CD4-positive, alpha-beta T cell (primary cell): ENCODE measurements at regions of chr4 and their contacts with region 1.

Region 1: DNA sequence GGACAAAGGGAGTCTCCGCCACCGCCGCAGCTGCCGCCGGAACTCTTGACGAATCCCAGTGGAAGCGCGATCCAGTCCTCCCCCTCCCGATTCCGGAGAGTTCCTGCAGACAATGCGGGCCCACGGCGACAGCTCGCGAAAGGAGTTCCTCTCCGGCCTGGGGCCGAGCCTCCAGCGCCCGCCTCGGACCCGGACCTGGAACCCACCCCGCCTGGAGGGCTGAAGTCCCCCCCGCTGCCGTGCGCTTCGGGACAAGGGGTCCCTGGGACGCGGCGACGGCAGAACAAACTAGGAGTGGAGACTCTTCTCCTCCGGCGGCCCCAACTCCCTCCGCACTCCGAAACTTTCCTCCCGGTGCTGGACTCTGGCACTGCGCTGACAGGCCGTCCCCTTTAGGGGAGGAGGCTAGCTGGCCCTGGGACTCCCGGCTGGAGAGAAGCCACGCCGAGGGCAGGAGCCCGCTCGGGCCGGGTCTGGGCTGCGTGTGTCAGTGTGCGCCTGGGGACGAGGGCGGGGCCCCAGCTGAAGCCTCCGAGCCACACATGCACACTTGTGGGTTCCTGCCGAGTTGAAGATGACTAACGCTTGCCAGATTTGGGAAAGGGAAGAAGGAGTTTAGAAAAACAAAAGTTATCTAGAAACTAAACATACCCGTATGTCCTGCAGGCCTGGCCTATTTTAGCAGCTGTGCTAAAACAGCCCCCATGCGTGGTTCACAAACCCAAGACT is at the start of gene ANTXR2:
- DNase-seq: peak; percentile 37 to 88 (median 67)
- ATAC-seq: peak; percentile 80
- H3K4me3 ChIP-seq: peak within 1 kb of the TSS; percentile 90
- H3K4me3 Mint-ChIP-seq: peak within 1 kb of the TSS; percentile 99
- H3K27ac ChIP-seq: peak within 1 kb of the TSS; percentile 78 to 82
- H3K27ac Mint-ChIP-seq: peak within 1 kb of the TSS; percentile 95
- H3K4me1 ChIP-seq: peaks cover 22% of the 10 kb centered on the region
- H3K4me1 Mint-ChIP-seq: peaks cover 79% of the 10 kb centered on the region
- H3K27me3 ChIP-seq: no peaks in the 10 kb centered on the region
- H3K27me3 Mint-ChIP-seq: no peaks in the 10 kb centered on the region
- CTCF ChIP-seq: no peak
- total RNA-seq, gene ANTXR2: 15.3 to 16.7 TPM

Region 2: DNA sequence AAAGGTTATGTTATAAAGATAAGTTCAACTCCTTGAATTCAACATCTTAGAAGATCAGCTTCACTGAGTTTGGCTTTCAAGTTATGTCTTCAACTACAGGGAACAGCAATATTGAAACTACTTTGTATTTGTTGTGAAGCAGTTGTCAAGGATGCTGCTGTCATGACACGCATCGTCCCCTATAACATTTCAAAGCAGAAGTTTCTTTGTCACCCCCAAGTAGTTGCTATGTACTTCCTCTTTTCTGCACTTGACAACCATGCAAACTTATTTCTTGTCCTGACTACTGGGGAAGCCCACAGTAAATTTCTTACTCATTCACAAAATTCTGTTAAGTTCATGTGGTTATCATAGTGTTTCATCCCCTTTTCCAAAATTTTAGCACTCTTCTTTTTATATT is 14.2 kb before region 1 on chr4:
- CTCF ChIA-PET with region 1: interaction called, 3 read pairs
- POLR2A ChIA-PET with region 1: interaction called, 21 read pairs
- intact Hi-C with region 1: loop called in 1 of 2 experiments (anchors 1 kb)
- DNase-seq: peak in 8 of 14 experiments; percentile 16 to 93 (median 38)
- ATAC-seq: peak; percentile 90
- H3K4me3 ChIP-seq: peak overlapping the region; percentile 19
- H3K4me3 Mint-ChIP-seq: peak overlapping the region; percentile 82
- H3K27ac ChIP-seq: peak overlapping the region; percentile 81 to 93
- H3K27ac Mint-ChIP-seq: peak overlapping the region; percentile 93
- H3K4me1 ChIP-seq: peaks cover 13% of the 10 kb centered on the region
- H3K4me1 Mint-ChIP-seq: peaks cover 45% of the 10 kb centered on the region
- H3K27me3 ChIP-seq: no peaks in the 10 kb centered on the region
- H3K27me3 Mint-ChIP-seq: no peaks in the 10 kb centered on the region
- CTCF ChIP-seq: no peak

Region 3: GRCh38 chr4:80221161-80221560 is 148.3 kb after region 1 on chr4:
- CTCF ChIA-PET with region 1: no interaction called
- POLR2A ChIA-PET with region 1: no interaction called
- intact Hi-C with region 1: no loop called
- DNase-seq: no peak
- ATAC-seq: no peak
- H3K4me3 ChIP-seq: no peak overlapping the region
- H3K4me3 Mint-ChIP-seq: no peak overlapping the region
- H3K27ac ChIP-seq: no peak overlapping the region
- H3K27ac Mint-ChIP-seq: no peak overlapping the region
- H3K4me1 ChIP-seq: no peaks in the 10 kb centered on the region
- H3K4me1 Mint-ChIP-seq: no peaks in the 10 kb centered on the region
- H3K27me3 ChIP-seq: peaks cover 3 to 47% of the 10 kb centered on the region in 2 experiments
- H3K27me3 Mint-ChIP-seq: peaks cover 46% of the 10 kb centered on the region
- CTCF ChIP-seq: peak; percentile 21